ENCODE measurements at regions of chr15 and their contacts with region 1.

Region 1: GRCh38 chr15:73697033-73697467 is 12.9 kb downstream of the CD276 start:
- DNase-seq: no peak
- H3K4me3 ChIP-seq: no peak overlapping the region
- H3K27ac ChIP-seq: 0 out of 2 replicates have a peak overlapping the region, but pooled peaks have one; percentile 3
- H3K4me1 ChIP-seq: peaks cover 0 to 21% (median 9%) of the 10 kb centered on the region in 4 experiments; a peak in 6 of 7 replicates
- H3K27me3 ChIP-seq: no peaks in the 10 kb centered on the region
- CTCF ChIP-seq: no peak
- EP300 ChIP-seq: no peak
- POLR2A ChIP-seq: no peak
- RAD21 ChIP-seq: no peak

Region 2: GRCh38 chr15:73305331-73306211 is 391.5 kb before region 1 on chr15:
- CTCF ChIA-PET with region 1: interaction called, 10 read pairs
- POLR2A ChIA-PET with region 1: no interaction called
- DNase-seq: peak; percentile 39 to 71
- H3K4me3 ChIP-seq: no peak overlapping the region
- H3K27ac ChIP-seq: no peak overlapping the region
- H3K4me1 ChIP-seq: peaks cover 0 to 4% (median 0%) of the 10 kb centered on the region in 4 experiments; a peak in 1 of 7 replicates
- H3K27me3 ChIP-seq: no peaks in the 10 kb centered on the region
- CTCF ChIP-seq: peak; percentile 76 to 92 (median 81)
- EP300 ChIP-seq: no peak
- POLR2A ChIP-seq: no peak
- RAD21 ChIP-seq: peak; percentile 94

Region 3: DNA sequence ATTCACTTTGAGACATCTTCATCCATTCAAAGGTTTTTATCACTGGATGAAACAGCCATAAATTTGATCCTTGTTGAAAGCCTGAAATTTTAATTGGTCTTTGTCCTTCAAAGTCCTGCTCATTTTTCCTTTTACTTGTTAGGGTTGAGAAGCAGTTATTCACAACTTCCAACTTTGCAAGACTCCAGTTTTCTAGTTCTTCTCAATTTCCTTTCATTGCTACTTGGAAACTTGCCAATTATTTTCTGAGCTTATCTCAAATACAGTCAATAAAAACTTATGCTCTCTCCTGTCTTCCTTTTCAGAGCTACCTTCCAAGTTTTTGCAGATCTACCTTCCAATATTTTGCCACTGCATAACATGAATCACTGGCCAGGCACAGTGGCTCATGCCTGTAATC is 36.6 kb before region 1 on chr15:
- CTCF ChIA-PET with region 1: interaction called, 11 read pairs
- POLR2A ChIA-PET with region 1: no interaction called
- DNase-seq: no peak
- H3K4me3 ChIP-seq: no peak overlapping the region
- H3K27ac ChIP-seq: no peak overlapping the region
- H3K4me1 ChIP-seq: no peaks in the 10 kb centered on the region
- H3K27me3 ChIP-seq: 0 out of 7 replicates have a peak, but pooled peaks cover 0 to 2% (median 0%) of the 10 kb centered on the region in 4 experiments
- CTCF ChIP-seq: no peak
- EP300 ChIP-seq: no peak
- POLR2A ChIP-seq: no peak
- RAD21 ChIP-seq: no peak

Region 4: DNA sequence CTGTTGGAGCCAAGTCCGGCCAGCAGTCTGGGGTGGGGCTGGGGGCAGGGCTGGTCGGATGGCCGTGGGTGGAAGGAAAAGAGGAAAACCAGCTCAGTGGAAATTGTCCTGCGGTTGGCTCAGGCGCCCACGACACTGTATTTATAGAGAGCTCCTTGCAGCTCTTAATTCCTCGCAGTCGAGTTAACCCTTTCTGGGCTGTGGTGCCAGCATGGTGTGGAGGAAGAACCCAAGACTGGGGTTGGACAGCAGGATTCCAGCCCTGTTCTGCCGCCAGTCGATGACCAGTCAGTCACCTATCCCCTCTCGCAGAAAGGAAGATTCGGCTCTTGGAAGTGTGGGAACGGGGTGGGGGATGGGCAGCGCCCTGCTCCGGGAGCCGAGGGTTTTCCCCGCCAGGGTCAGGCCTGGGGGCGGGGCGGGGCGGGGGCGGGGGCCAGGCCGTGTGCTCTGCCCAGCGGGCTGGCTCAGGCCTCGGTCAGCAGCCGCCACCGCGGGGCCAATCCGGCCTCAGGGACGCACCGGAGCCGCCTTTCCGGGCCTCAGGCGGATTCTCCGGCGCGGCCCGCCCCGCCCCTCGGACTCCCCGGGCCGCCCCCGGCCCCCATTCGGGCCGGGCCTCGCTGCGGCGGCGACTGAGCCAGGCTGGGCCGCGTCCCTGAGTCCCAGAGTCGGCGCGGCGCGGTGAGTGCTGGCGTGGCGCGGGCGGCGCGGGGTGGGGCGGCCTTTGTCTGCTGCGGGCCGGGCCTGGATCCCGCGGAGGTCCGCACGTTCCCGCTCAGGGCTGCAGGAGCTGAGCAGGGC is 13.1 kb before region 1 on chr15 and contains the start of gene CD276:
- CTCF ChIA-PET with region 1: interaction called, 496 read pairs
- POLR2A ChIA-PET with region 1: interaction called, 93 read pairs
- DNase-seq: peak in 1 of 2 experiments; percentile 80
- H3K4me3 ChIP-seq: peak within 1 kb of the TSS; percentile 80 to 95 (median 86)
- H3K27ac ChIP-seq: peak within 1 kb of the TSS; percentile 77
- H3K4me1 ChIP-seq: peaks cover 2 to 22% (median 10%) of the 10 kb centered on the region in 4 experiments; a peak in 4 of 7 replicates
- H3K27me3 ChIP-seq: no peaks in the 10 kb centered on the region
- CTCF ChIP-seq: peak in 1 of 3 experiments; percentile 42; a peak in 1 of 4 replicates
- EP300 ChIP-seq: no peak
- POLR2A ChIP-seq: peak; percentile 29 to 41; a peak in 2 of 3 replicates
- RAD21 ChIP-seq: no peak; a peak in 1 of 4 replicates
- total RNA-seq, gene CD276: 152 and 156 TPM in 2 replicates

Region 5: GRCh38 chr15:73727330-73727976 is 30.4 kb after region 1 on chr15:
- CTCF ChIA-PET with region 1: interaction called, 187 read pairs
- POLR2A ChIA-PET with region 1: no interaction called
- DNase-seq: no peak
- H3K4me3 ChIP-seq: no peak overlapping the region
- H3K27ac ChIP-seq: no peak overlapping the region
- H3K4me1 ChIP-seq: no peaks in the 10 kb centered on the region; a peak in 1 of 7 replicates
- H3K27me3 ChIP-seq: no peaks in the 10 kb centered on the region
- CTCF ChIP-seq: no peak
- EP300 ChIP-seq: no peak
- POLR2A ChIP-seq: no peak
- RAD21 ChIP-seq: no peak

Region 6: DNA sequence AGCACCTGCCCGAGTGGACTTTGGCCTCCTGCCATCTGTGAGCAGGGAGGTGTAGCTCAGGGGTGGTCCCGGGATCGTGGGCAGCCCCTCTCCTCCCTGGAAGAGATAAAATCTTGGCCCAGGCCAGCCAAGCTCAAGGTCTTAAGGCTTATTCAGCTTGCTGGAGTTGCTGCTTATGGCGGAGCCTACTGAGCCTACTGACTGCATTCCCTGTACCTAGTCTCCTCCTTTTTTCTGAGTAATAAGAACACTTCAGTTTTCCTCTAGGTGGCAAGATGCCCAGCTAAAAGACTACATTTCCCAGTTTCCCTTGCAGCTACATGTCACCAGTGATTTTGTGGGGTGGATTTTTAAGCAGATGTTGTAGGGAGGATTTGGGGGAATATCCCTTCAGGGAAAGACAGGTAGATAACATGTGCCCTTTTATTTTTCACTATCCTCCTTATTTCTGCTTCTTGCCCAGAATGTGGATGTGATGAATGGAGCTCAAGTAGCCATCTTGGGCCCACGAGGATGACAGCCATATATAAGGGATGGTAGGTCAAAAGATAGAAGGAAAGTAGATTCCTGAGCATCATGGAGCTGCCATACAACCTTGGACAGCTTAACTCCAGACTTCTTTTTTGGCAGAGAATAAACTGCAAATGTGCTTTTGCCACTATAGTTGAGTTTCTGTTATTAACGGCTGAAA is 97.5 kb after region 1 on chr15:
- CTCF ChIA-PET with region 1: no interaction called
- POLR2A ChIA-PET with region 1: no interaction called
- DNase-seq: no peak
- H3K4me3 ChIP-seq: no peak overlapping the region
- H3K27ac ChIP-seq: no peak overlapping the region
- H3K4me1 ChIP-seq: peaks cover 0 to 9% (median under 1%) of the 10 kb centered on the region in 4 experiments; a peak in 3 of 7 replicates
- H3K27me3 ChIP-seq: no peaks in the 10 kb centered on the region; a peak in 1 of 7 replicates
- CTCF ChIP-seq: no peak
- EP300 ChIP-seq: no peak
- POLR2A ChIP-seq: no peak
- RAD21 ChIP-seq: no peak

Region 7: GRCh38 chr15:73844356-73844755 is 147.3 kb after region 1 on chr15:
- CTCF ChIA-PET with region 1: no interaction called
- POLR2A ChIA-PET with region 1: no interaction called
- DNase-seq: no peak
- H3K4me3 ChIP-seq: no peak overlapping the region
- H3K27ac ChIP-seq: no peak overlapping the region
- H3K4me1 ChIP-seq: peaks cover 0 to 11% (median 5%) of the 10 kb centered on the region in 4 experiments; a peak in 5 of 7 replicates
- H3K27me3 ChIP-seq: peaks cover 0 to 2% (median under 1%) of the 10 kb centered on the region in 4 experiments; a peak in 1 of 7 replicates
- CTCF ChIP-seq: no peak
- EP300 ChIP-seq: no peak
- POLR2A ChIP-seq: no peak
- RAD21 ChIP-seq: no peak

Region 8: GRCh38 chr15:73918749-73919148 is 221.7 kb after region 1 on chr15:
- CTCF ChIA-PET with region 1: no interaction called
- POLR2A ChIA-PET with region 1: no interaction called
- DNase-seq: no peak
- H3K4me3 ChIP-seq: no peak overlapping the region
- H3K27ac ChIP-seq: no peak overlapping the region
- H3K4me1 ChIP-seq: peaks cover 0 to 27% (median 19%) of the 10 kb centered on the region in 4 experiments; a peak in 6 of 7 replicates
- H3K27me3 ChIP-seq: no peaks in the 10 kb centered on the region; a peak in 1 of 7 replicates
- CTCF ChIP-seq: no peak
- EP300 ChIP-seq: no peak
- POLR2A ChIP-seq: no peak
- RAD21 ChIP-seq: no peak